ENCODE measurements at regions of chr11 and their contacts with region 1.

Region 1: GRCh38 chr11:67656278-67656922 is 5.9 kb upstream of the ACY3 start:
- DNase-seq: no peak
- ATAC-seq: no peak
- H3K4me3 ChIP-seq: no peak overlapping the region
- H3K4me3 Mint-ChIP-seq: no peak overlapping the region
- H3K27ac ChIP-seq: no peak overlapping the region
- H3K27ac Mint-ChIP-seq: no peak overlapping the region
- H3K4me1 ChIP-seq: peaks cover 3% of the 10 kb centered on the region
- H3K4me1 Mint-ChIP-seq: no peaks in the 10 kb centered on the region
- H3K27me3 ChIP-seq: no peaks in the 10 kb centered on the region
- H3K27me3 Mint-ChIP-seq: peaks cover 0 to 5% of the 10 kb centered on the region in 2 donors
- CTCF ChIP-seq: no peak

Region 2: DNA sequence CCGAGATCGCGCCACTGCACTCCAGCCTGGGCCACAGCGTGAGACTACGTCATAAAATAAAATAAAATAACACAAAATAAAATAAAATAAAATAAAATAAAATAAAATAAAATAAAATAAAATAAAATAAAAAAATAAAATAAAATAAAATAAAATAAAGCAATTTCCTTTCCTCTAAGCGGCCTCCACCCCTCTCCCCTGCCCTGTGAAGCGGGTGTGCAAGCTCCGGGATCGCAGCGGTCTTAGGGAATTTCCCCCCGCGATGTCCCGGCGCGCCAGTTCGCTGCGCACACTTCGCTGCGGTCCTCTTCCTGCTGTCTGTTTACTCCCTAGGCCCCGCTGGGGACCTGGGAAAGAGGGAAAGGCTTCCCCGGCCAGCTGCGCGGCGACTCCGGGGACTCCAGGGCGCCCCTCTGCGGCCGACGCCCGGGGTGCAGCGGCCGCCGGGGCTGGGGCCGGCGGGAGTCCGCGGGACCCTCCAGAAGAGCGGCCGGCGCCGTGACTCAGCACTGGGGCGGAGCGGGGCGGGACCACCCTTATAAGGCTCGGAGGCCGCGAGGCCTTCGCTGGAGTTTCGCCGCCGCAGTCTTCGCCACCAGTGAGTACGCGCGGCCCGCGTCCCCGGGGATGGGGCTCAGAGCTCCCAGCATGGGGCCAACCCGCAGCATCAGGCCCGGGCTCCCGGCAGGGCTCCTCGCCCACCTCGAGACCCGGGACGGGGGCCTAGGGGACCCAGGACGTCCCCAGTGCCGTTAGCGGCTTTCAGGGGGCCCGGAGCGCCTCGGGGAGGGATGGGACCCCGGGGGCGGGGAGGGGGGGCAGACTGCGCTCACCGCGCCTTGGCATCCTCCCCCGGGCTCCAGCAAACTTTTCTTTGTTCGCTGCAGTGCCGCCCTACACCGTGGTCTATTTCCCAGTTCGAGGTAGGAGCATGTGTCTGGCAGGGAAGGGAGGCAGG is 72.9 kb before region 1 on chr11 and contains the start of gene GSTP1:
- intact Hi-C with region 1: loop called (anchors 5 kb)
- DNase-seq: peak; percentile 86 to 87
- ATAC-seq: peak; percentile 87 to 93 (median 88)
- H3K4me3 ChIP-seq: peak within 1 kb of the TSS; percentile 66
- H3K4me3 Mint-ChIP-seq: peak within 1 kb of the TSS; percentile 87
- H3K27ac ChIP-seq: peak within 1 kb of the TSS; percentile 80
- H3K27ac Mint-ChIP-seq: peak within 1 kb of the TSS; percentile 84 to 88
- H3K4me1 ChIP-seq: peaks cover 59% of the 10 kb centered on the region
- H3K4me1 Mint-ChIP-seq: peaks cover 51 to 74% of the 10 kb centered on the region in 2 donors
- H3K27me3 ChIP-seq: no peaks in the 10 kb centered on the region
- H3K27me3 Mint-ChIP-seq: no peaks in the 10 kb centered on the region
- CTCF ChIP-seq: peak; percentile 61
- total RNA-seq, gene GSTP1: 172 to 218 (median 212) TPM

Region 3: DNA sequence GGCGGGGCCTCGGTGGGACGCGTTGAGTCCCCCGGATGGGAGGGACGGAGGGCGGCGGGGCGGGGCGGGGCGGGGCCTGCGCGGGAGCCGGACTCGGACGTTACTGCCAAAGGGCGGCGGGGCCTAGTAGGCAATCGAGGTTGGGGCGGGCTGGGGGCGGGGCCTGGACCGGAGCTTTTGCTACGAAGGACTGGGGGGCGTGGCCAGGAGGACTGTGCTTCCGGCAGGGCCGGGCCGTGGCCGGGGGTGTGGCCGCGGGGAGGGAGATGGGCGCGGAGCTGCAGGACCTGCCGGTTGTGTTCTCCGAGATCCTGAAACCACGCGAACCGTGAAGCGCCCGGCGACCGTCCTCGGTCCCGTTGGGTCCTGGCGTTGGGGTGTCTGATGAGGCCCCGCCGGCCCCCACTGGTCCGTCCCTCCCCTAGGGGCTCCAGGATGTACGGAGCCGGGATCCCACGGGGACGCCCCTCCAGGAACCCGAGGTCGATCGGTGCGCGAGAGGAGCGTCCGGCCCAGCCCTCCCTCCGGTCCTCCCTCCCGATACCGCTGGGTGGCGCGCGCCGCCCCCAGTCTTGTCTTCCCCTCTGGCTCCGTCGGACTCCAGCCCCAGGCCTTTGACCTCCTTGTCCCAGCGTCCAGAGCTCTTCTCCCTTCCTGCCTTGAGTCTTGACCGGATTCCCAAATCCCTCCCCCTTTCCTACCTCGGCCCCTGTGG is 26.0 kb before region 1 on chr11:
- intact Hi-C with region 1: loop called (anchors 1 kb)
- DNase-seq: peak; percentile 93 to 96
- ATAC-seq: peak; percentile 78 to 90 (median 82)
- H3K4me3 ChIP-seq: peak overlapping the region; percentile 59
- H3K4me3 Mint-ChIP-seq: peak overlapping the region; percentile 86
- H3K27ac ChIP-seq: peak overlapping the region; percentile 81
- H3K27ac Mint-ChIP-seq: peak overlapping the region; percentile 71 to 95
- H3K4me1 ChIP-seq: peaks cover 23% of the 10 kb centered on the region
- H3K4me1 Mint-ChIP-seq: peaks cover 5 to 22% of the 10 kb centered on the region in 2 donors
- H3K27me3 ChIP-seq: no peaks in the 10 kb centered on the region
- H3K27me3 Mint-ChIP-seq: no peaks in the 10 kb centered on the region
- CTCF ChIP-seq: peak; percentile 76

Region 4: GRCh38 chr11:67640021-67640757 is 16.2 kb before region 1 on chr11:
- intact Hi-C with region 1: loop called (anchors 1 kb)
- DNase-seq: peak; percentile 58 to 76
- ATAC-seq: peak; percentile 65 to 99 (median 98)
- H3K4me3 ChIP-seq: no peak overlapping the region
- H3K4me3 Mint-ChIP-seq: no peak overlapping the region
- H3K27ac ChIP-seq: no peak overlapping the region
- H3K27ac Mint-ChIP-seq: no peak overlapping the region
- H3K4me1 ChIP-seq: peaks cover 5% of the 10 kb centered on the region
- H3K4me1 Mint-ChIP-seq: no peaks in the 10 kb centered on the region
- H3K27me3 ChIP-seq: no peaks in the 10 kb centered on the region
- H3K27me3 Mint-ChIP-seq: no peaks in the 10 kb centered on the region
- CTCF ChIP-seq: peak; percentile 56

Region 5: DNA sequence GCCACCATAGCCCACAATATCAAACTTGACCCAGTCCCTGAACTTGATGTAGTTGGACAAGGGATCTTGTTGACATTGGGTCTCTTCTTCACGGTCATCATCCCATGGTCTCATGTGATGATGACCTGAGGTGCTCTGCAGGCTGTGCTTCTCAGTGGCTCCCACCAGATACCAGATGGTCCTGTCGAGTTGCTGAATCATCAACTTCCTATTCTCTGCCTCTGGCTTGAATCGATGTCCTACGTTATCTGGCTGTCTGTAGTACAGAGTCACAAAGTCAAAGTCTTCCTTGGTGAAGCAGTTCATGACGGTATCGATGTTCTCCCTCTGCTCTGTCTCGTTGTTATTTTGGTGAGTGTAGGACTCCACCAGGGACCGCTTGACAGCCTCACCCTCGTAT is 163.7 kb after region 1 on chr11:
- intact Hi-C with region 1: no loop called
- DNase-seq: no peak
- ATAC-seq: no peak
- H3K4me3 ChIP-seq: no peak overlapping the region
- H3K4me3 Mint-ChIP-seq: no peak overlapping the region
- H3K27ac ChIP-seq: no peak overlapping the region
- H3K27ac Mint-ChIP-seq: no peak overlapping the region
- H3K4me1 ChIP-seq: no peaks in the 10 kb centered on the region
- H3K4me1 Mint-ChIP-seq: no peaks in the 10 kb centered on the region
- H3K27me3 ChIP-seq: no peaks in the 10 kb centered on the region
- H3K27me3 Mint-ChIP-seq: peaks cover 9 to 13% of the 10 kb centered on the region in 2 donors
- CTCF ChIP-seq: no peak